CD8-positive, alpha-beta T cell (primary cell): ENCODE measurements at regions of chr5 and their contacts with region 1.

Region 1: GRCh38 chr5:134411546-134412266 is at the start of gene CDKN2AIPNL:
- DNase-seq: peak; percentile 81 to 95 (median 91)
- ATAC-seq: peak; percentile 99
- H3K4me3 ChIP-seq: peak within 1 kb of the TSS; percentile 77 to 84
- H3K4me3 Mint-ChIP-seq: peak within 1 kb of the TSS; percentile 90
- H3K27ac ChIP-seq: peak within 1 kb of the TSS; percentile 65 to 66
- H3K27ac Mint-ChIP-seq: peak within 1 kb of the TSS; percentile 90
- H3K4me1 ChIP-seq: peaks cover 23% of the 10 kb centered on the region
- H3K4me1 Mint-ChIP-seq: peaks cover 38% of the 10 kb centered on the region
- H3K27me3 ChIP-seq: no peaks in the 10 kb centered on the region
- H3K27me3 Mint-ChIP-seq: no peaks in the 10 kb centered on the region
- CTCF ChIP-seq: peak; percentile 73
- total RNA-seq, gene CDKN2AIPNL: 14.7 to 15.5 TPM

Region 2: GRCh38 chr5:133801955-133802751 is 609.6 kb before region 1 on chr5:
- CTCF ChIA-PET with region 1: no interaction called
- POLR2A ChIA-PET with region 1: no interaction called
- intact Hi-C with region 1: no loop called
- DNase-seq: no peak
- ATAC-seq: no peak
- H3K4me3 ChIP-seq: no peak overlapping the region
- H3K4me3 Mint-ChIP-seq: no peak overlapping the region
- H3K27ac ChIP-seq: no peak overlapping the region
- H3K27ac Mint-ChIP-seq: no peak overlapping the region
- H3K4me1 ChIP-seq: no peaks in the 10 kb centered on the region
- H3K4me1 Mint-ChIP-seq: peaks cover 3% of the 10 kb centered on the region
- H3K27me3 ChIP-seq: peaks cover 0 to 2% of the 10 kb centered on the region in 2 experiments
- H3K27me3 Mint-ChIP-seq: peaks cover 12% of the 10 kb centered on the region
- CTCF ChIP-seq: no peak

Region 3: GRCh38 chr5:134304311-134304710 is 107.4 kb before region 1 on chr5:
- CTCF ChIA-PET with region 1: interaction called, 3 read pairs
- POLR2A ChIA-PET with region 1: no interaction called
- intact Hi-C with region 1: loop called (anchors 1 to 10 kb)
- DNase-seq: no peak
- ATAC-seq: no peak
- H3K4me3 ChIP-seq: no peak overlapping the region
- H3K4me3 Mint-ChIP-seq: no peak overlapping the region
- H3K27ac ChIP-seq: no peak overlapping the region
- H3K27ac Mint-ChIP-seq: no peak overlapping the region
- H3K4me1 ChIP-seq: no peaks in the 10 kb centered on the region
- H3K4me1 Mint-ChIP-seq: no peaks in the 10 kb centered on the region
- H3K27me3 ChIP-seq: no peaks in the 10 kb centered on the region
- H3K27me3 Mint-ChIP-seq: no peaks in the 10 kb centered on the region
- CTCF ChIP-seq: no peak

Region 4: GRCh38 chr5:134436523-134437339 is 25.0 kb after region 1 on chr5:
- CTCF ChIA-PET with region 1: interaction called, 6 read pairs
- POLR2A ChIA-PET with region 1: no interaction called
- intact Hi-C with region 1: loop called in 1 of 2 experiments (anchors 1 kb)
- DNase-seq: peak; percentile 12 to 78 (median 57)
- ATAC-seq: peak; percentile 74
- H3K4me3 ChIP-seq: no peak overlapping the region
- H3K4me3 Mint-ChIP-seq: peak overlapping the region; percentile 9
- H3K27ac ChIP-seq: peak overlapping the region; percentile 18 to 30
- H3K27ac Mint-ChIP-seq: peak overlapping the region; percentile 80
- H3K4me1 ChIP-seq: peaks cover 12% of the 10 kb centered on the region
- H3K4me1 Mint-ChIP-seq: peaks cover 16% of the 10 kb centered on the region
- H3K27me3 ChIP-seq: no peaks in the 10 kb centered on the region
- H3K27me3 Mint-ChIP-seq: peaks cover 2% of the 10 kb centered on the region
- CTCF ChIP-seq: no peak

Region 5: DNA sequence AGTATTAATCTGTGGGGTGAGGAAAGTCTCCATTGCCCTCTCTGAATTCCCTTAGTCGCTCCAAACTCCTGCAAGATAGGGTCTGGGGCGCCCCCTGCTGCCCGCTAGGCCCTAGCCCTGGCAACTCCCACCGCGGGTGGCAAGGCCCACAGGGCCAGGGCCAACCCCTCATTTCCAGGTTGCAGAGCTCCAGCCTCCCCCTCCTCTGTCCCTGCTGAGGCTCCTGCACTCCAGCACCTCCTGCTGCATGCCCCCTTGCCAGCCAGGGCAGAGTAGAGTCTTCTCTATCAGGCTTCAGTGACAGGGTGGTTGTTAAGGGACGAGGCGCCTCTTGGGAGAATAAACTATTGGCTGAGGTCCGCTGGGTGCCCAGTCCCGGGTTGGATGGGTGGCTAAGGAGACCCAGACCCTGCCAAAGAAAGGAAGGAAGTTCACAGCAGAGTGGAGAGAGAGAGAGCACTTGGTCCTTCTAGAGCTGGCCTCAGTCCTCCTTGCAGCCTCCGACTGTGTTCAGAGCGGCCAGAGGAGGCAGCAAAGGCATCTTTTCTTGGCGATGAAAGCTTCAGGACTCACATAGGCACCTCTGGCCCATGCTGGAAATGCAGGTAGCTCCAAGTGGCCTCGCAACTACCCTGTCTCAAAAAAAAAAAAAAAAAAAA is 175.3 kb after region 1 on chr5:
- CTCF ChIA-PET with region 1: interaction called, 10 read pairs
- POLR2A ChIA-PET with region 1: no interaction called
- intact Hi-C with region 1: no loop called
- DNase-seq: peak; percentile 62 to 89 (median 80)
- ATAC-seq: peak; percentile 95
- H3K4me3 ChIP-seq: no peak overlapping the region
- H3K4me3 Mint-ChIP-seq: no peak overlapping the region
- H3K27ac ChIP-seq: no peak overlapping the region
- H3K27ac Mint-ChIP-seq: peak overlapping the region; percentile 13
- H3K4me1 ChIP-seq: peaks cover 4% of the 10 kb centered on the region
- H3K4me1 Mint-ChIP-seq: peaks cover 9% of the 10 kb centered on the region
- H3K27me3 ChIP-seq: no peaks in the 10 kb centered on the region
- H3K27me3 Mint-ChIP-seq: no peaks in the 10 kb centered on the region
- CTCF ChIP-seq: peak; percentile 87